ENCODE measurements at regions of chr1 and their contacts with region 1.

Region 1: DNA sequence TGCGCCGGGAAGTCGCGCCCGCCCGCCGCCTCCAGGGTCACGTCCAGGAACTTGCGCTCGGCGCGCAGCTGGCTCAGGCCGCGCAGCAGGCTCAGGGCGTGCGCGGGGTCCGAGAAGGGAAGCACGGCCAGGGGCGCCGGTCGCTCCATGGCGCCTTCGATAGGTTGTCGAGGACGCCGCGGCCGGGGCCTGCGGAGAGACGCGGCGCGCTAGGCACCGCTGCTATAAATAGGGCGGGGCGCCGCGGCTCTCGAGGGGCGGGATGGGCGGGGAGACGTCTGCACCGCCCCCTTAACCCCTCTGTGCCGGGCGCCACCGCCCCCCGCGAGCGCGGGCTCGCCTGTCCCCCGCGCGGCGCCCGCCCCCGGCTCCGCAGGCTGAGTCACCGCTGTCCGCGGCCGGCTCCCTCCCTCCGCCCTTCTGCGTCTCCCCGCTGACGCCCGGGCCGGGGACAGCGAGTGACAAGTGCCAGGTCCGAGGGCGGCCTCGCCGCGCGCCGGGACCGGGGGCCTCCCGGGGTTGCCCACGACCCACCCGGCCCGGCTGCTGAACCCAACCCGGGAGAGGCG is at the start of gene KLHL21:
- DNase-seq: peak; percentile 95 to 97
- ATAC-seq: peak; percentile 89
- H3K4me3 ChIP-seq: peak within 1 kb of the TSS; percentile 57 to 70
- H3K27ac ChIP-seq: peak within 1 kb of the TSS; percentile 97 to 100
- H3K4me1 ChIP-seq: no peaks in the 10 kb centered on the region
- H3K27me3 ChIP-seq: peaks cover 0 to 2% of the 10 kb centered on the region in 2 donors
- total RNA-seq, gene KLHL21: 37.5 to 38.3 TPM

Region 2: GRCh38 chr1:6330410-6330911 is 272.3 kb before region 1 on chr1:
- intact Hi-C with region 1: no loop called
- DNase-seq: no peak
- ATAC-seq: no peak
- H3K4me3 ChIP-seq: no peak overlapping the region
- H3K27ac ChIP-seq: no peak overlapping the region
- H3K4me1 ChIP-seq: no peaks in the 10 kb centered on the region
- H3K27me3 ChIP-seq: no peaks in the 10 kb centered on the region

Region 3: DNA sequence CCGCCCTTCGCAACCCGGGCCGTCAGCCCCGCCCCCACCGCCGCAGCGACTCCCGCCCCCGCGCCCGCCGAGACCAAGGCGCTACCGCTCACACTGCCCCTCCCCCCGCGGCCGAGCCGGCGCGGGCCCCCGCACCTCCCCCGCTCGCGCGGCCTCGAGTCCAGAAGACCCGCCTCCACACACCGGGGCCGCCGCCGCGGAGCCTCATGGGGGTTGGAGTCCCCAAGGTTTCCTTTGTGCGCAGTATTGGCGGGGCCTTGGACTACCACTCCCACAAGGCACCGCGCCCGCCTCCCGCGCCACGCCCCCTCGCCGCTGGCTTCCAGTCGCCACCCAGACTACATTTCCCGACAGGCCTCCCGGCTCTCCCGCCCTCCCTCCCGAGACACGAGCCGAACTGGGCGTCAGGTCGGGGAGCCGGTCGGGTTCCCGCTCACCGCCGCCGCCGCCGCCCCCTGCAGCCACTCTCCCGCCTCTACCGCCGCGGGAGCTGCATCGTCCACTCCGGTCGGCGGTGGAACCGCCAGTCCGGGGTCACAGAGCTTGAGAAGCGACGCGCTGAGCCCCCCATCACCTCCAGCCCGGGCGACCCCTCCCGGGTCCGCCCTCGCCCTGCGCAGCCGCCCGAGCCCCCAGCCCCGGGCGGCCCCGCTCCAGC is 10.7 kb after region 1 on chr1 and contains the start of gene PHF13:
- intact Hi-C with region 1: loop called in 1 of 2 experiments (anchors 1 kb)
- DNase-seq: peak; percentile 100
- ATAC-seq: peak; percentile 99
- H3K4me3 ChIP-seq: peak within 1 kb of the TSS; percentile 70 to 97
- H3K27ac ChIP-seq: peak within 1 kb of the TSS; percentile 46 to 92
- H3K4me1 ChIP-seq: no peaks in the 10 kb centered on the region
- H3K27me3 ChIP-seq: no peaks in the 10 kb centered on the region
- total RNA-seq, gene PHF13: 19.0 to 19.3 TPM

Region 4: GRCh38 chr1:6646499-6647148 is 43.9 kb after region 1 on chr1:
- intact Hi-C with region 1: no loop called
- DNase-seq: no peak
- ATAC-seq: peak; percentile 72
- H3K4me3 ChIP-seq: no peak overlapping the region
- H3K27ac ChIP-seq: no peak overlapping the region
- H3K4me1 ChIP-seq: no peaks in the 10 kb centered on the region
- H3K27me3 ChIP-seq: no peaks in the 10 kb centered on the region